ENCODE measurements at regions of chr2 and their contacts with region 1.

Region 1: GRCh38 chr2:7281231-7282201 is 364.3 kb downstream of the RNF144A start:
- DNase-seq: no peak
- H3K27ac ChIP-seq: no peak overlapping the region
- CTCF ChIP-seq: no peak

Region 2: GRCh38 chr2:6700335-6700734 is 581.2 kb before region 1 on chr2:
- CTCF ChIA-PET with region 1: no interaction called
- POLR2A ChIA-PET with region 1: no interaction called
- DNase-seq: no peak
- H3K27ac ChIP-seq: no peak overlapping the region
- CTCF ChIP-seq: no peak

Region 3: GRCh38 chr2:7165736-7166135 is 115.8 kb before region 1 on chr2:
- CTCF ChIA-PET with region 1: no interaction called
- POLR2A ChIA-PET with region 1: interaction called, 12 read pairs
- DNase-seq: no peak
- H3K27ac ChIP-seq: no peak overlapping the region
- CTCF ChIP-seq: no peak

Region 4: GRCh38 chr2:7292154-7292691 is 10.7 kb after region 1 on chr2:
- CTCF ChIA-PET with region 1: no interaction called
- POLR2A ChIA-PET with region 1: no interaction called
- DNase-seq: no peak
- H3K27ac ChIP-seq: no peak overlapping the region
- CTCF ChIP-seq: no peak

Region 5: DNA sequence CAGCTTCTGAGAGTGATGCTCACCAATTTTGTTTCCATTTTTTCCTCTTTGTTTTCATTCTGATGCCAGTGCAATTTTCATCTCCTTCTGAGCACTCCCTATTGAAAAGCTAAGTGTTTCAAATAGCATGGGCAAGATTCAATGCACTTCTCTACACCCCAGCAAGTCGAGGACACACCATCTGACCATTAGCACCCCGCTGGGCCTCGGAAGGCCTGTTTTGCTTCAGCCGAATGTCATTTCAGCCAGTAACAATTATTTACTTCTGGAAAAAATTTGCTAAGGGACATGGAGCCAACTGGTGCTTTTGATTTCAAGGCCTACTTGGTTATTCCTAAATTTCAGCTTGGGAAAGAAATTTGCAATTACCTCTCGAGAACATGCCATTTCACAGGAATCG is 28.1 kb after region 1 on chr2:
- CTCF ChIA-PET with region 1: no interaction called
- POLR2A ChIA-PET with region 1: no interaction called
- DNase-seq: no peak
- H3K27ac ChIP-seq: no peak overlapping the region
- CTCF ChIP-seq: no peak

Region 6: DNA sequence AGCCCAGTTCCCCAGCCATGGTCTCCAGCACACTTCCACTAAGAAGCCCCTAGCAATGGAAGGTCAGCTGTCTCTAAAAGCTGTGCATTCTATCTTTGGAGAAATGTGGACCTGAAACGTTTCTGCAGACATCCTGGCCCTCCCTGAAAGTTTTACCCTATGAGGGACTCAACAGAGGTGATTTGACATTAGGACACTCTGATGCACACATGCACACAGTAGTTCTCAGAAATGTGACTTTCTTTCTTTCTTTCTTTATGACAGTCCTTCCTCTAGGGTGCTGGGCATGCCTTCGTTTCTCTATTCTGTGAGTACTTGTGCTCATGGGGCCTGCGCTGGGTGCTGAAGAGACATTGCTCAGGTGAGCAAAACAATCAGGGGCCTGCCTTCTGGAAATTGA is 493.0 kb after region 1 on chr2:
- CTCF ChIA-PET with region 1: no interaction called
- POLR2A ChIA-PET with region 1: no interaction called
- DNase-seq: no peak
- H3K27ac ChIP-seq: no peak overlapping the region
- CTCF ChIP-seq: no peak